Activated CD4-positive, alpha-beta T cell treated with anti-CD3 and anti-CD28 coated beads, Interleukin-2, amount 10 ng/mL, durations not matched to agents 7 days and 5 days (primary cell): ENCODE measurements at regions of chr1 and their contacts with region 1.

Region 1: DNA sequence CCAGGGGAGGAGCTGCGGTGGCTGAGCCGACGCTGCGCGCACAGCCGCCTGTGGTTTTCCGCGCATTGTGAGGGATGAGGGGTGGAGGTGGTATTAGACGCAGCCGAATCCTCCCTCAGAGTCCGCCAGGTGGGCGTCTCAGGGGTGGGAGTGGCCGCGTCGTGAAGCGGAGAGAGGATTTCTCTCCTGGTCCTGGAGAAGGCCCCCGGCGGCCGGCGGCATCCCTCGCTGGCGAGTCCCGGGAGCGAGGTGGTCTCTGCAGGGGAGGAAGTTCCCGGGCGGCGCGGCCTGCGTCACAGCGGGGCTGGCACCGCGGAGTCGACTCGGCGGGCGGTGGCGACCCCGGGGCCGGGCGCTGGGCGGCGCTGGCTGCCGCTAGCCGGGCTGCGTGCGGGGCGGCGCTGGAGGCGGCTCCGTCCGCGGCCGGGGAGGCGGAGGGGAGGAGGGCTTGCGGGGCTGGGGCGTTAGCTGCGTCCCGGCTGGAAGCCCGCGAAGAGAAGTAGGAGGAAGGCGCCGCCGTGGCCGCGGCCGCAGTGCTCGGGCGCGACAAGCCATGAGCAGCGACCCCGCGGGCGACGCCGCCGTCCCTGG is at the start of gene LRRC8C:
- DNase-seq: peak; percentile 84
- H3K4me3 Mint-ChIP-seq: peak within 1 kb of the TSS; percentile 98
- H3K27ac Mint-ChIP-seq: peak within 1 kb of the TSS; percentile 97
- H3K4me1 Mint-ChIP-seq: peaks cover 72% of the 10 kb centered on the region
- H3K27me3 Mint-ChIP-seq: no peaks in the 10 kb centered on the region
- total RNA-seq, gene LRRC8C: 45.0 to 55.2 TPM

Region 2: DNA sequence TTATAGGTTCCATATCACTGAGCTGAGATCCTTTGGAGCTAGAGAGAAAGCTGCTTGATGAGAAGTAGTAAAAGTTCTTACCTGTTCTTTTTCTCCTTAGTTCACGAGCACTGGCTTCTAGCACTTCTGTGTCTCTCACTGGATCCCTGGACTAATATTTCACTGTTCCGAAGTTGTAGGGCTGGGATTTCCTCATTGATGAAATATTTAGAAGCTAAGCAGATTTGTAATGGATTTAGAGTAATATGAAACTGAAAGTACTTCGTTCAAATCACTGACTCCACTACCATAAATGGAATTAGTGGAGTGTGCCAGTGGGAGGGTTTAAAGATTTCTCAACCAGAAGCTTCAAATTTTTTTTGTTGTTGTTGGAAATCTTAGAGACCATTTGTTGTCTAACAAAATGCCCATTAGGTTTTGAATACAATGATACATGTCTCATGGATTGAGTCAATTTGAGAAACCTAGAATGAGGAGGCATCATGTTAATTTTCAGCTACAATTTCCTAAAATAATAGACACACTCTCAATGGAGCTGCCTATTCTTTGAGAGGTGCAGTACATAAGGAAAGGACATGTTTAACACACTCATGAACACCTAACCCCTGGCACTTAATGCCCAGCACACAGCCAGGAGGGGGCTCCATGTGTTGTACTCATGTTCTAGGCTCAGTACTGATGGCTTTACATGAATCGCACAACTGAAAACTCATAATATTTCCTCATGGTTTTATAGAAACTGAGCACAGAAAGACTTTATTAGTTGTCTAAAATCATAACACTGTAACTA is 567.5 kb before region 1 on chr1 and contains the start of gene GBP1:
- CTCF ChIA-PET with region 1: no interaction called
- POLR2A ChIA-PET with region 1: interaction called, 12 read pairs
- DNase-seq: peak; percentile 52
- H3K4me3 Mint-ChIP-seq: peak within 1 kb of the TSS; percentile 99
- H3K27ac Mint-ChIP-seq: peak within 1 kb of the TSS; percentile 94
- H3K4me1 Mint-ChIP-seq: peaks cover 60% of the 10 kb centered on the region
- H3K27me3 Mint-ChIP-seq: no peaks in the 10 kb centered on the region
- total RNA-seq, gene GBP1: 272 to 292 TPM

Region 3: DNA sequence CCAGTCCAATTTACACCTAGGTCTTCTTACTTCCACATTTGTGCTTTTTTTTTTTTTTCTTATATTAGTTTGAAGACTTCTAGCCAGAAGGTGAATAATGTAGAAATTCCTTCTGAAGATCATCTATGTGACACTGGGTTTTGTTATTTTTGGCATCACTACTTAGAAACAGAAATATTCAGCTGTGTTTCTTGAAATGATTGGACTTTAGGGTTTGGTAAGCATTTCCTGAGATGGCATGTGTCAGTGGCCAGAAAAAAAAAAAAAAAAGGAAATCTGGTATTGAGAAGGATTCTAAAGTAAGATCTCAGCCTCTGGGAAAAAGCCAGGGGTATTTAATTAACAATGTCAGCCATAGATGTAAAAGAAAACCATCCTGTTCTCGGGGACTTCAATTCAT is 43.2 kb before region 1 on chr1:
- CTCF ChIA-PET with region 1: no interaction called
- POLR2A ChIA-PET with region 1: no interaction called
- DNase-seq: no peak
- H3K4me3 Mint-ChIP-seq: no peak overlapping the region
- H3K27ac Mint-ChIP-seq: no peak overlapping the region
- H3K4me1 Mint-ChIP-seq: peaks cover 66% of the 10 kb centered on the region
- H3K27me3 Mint-ChIP-seq: no peaks in the 10 kb centered on the region

Region 4: GRCh38 chr1:89615676-89616598 is 16.8 kb before region 1 on chr1:
- CTCF ChIA-PET with region 1: interaction called, 57 read pairs
- POLR2A ChIA-PET with region 1: interaction called, 8 read pairs
- DNase-seq: no peak
- H3K4me3 Mint-ChIP-seq: no peak overlapping the region
- H3K27ac Mint-ChIP-seq: peak overlapping the region; percentile 38
- H3K4me1 Mint-ChIP-seq: peaks cover 74% of the 10 kb centered on the region
- H3K27me3 Mint-ChIP-seq: no peaks in the 10 kb centered on the region

Region 5: GRCh38 chr1:89657886-89658285 is 25.1 kb after region 1 on chr1:
- CTCF ChIA-PET with region 1: no interaction called
- POLR2A ChIA-PET with region 1: no interaction called
- DNase-seq: peak; percentile 65
- H3K4me3 Mint-ChIP-seq: peak overlapping the region; percentile 33
- H3K27ac Mint-ChIP-seq: peak overlapping the region; percentile 90
- H3K4me1 Mint-ChIP-seq: peaks cover 91% of the 10 kb centered on the region
- H3K27me3 Mint-ChIP-seq: no peaks in the 10 kb centered on the region

Region 6: GRCh38 chr1:89794406-89794805 is 161.7 kb after region 1 on chr1:
- CTCF ChIA-PET with region 1: no interaction called
- POLR2A ChIA-PET with region 1: no interaction called
- DNase-seq: no peak
- H3K4me3 Mint-ChIP-seq: no peak overlapping the region
- H3K27ac Mint-ChIP-seq: no peak overlapping the region
- H3K4me1 Mint-ChIP-seq: peaks cover 10% of the 10 kb centered on the region
- H3K27me3 Mint-ChIP-seq: no peaks in the 10 kb centered on the region